Activated CD8-positive, alpha-beta T cell treated with anti-CD3 and anti-CD28 coated beads, Interleukin-2, amount 10 ng/mL, durations not matched to agents 7 days and 5 days (primary cell): ENCODE measurements at regions of chr2 and their contacts with region 1.

Region 1: GRCh38 chr2:161954103-161954502 is 119.9 kb downstream of the DPP4 start:
- DNase-seq: peak; percentile 50
- ATAC-seq: peak; percentile 35
- H3K4me3 Mint-ChIP-seq: peak overlapping the region; percentile 13
- H3K27ac Mint-ChIP-seq: peak overlapping the region; percentile 96
- H3K4me1 Mint-ChIP-seq: peaks cover 70% of the 10 kb centered on the region
- H3K27me3 Mint-ChIP-seq: no peaks in the 10 kb centered on the region

Region 2: DNA sequence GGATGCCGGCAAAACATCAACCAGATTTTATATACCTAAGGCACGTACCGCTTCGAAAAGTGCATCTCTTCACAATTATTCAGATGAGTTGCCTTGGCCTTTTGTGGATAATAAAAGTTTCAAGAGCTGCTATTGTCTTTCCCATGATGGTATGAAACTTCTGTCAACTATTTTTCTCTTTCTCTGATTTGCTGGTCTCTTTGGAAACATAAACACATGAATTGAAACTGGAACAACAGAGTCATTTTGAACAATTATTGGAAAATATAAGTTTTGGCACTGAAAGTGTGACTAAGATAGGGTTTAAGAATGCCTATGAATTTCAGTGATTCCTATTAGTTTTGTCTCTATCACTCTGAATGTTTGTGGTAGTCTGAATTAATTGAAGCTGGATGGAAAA is 10.1 kb after region 1 on chr2:
- CTCF ChIA-PET with region 1: interaction called, 15 read pairs
- POLR2A ChIA-PET with region 1: interaction called, 9 read pairs
- DNase-seq: no peak
- ATAC-seq: no peak
- H3K4me3 Mint-ChIP-seq: no peak overlapping the region
- H3K27ac Mint-ChIP-seq: peak overlapping the region; percentile 16
- H3K4me1 Mint-ChIP-seq: peaks cover 65% of the 10 kb centered on the region
- H3K27me3 Mint-ChIP-seq: no peaks in the 10 kb centered on the region

Region 3: DNA sequence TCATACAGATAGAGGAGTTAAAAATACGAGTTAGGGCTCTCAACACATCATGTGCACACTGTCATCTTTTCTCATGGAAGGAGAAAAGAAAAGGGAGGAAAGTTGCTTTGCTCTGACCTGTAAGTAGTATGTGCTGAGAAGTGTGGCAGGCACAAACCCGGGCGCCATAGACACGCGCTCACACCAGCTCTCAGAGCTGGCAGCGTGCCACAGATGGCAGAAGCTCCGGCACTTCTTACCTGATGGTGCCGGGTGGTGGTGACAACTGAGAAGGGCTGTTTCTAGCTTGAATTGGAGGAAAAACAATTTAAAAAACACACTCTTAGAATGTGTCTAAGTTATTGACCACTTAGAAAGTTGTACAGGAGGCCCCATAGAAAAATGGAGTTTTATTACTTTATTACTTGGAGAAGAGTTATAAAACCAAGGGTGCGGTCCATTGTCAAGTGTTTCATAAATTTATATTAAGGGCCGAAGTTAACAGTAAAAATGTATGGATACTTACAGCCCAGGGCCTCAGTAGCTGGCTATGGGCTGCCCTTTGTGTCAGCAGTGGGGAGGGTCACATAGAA is 27.7 kb after region 1 on chr2:
- CTCF ChIA-PET with region 1: interaction called, 20 read pairs
- POLR2A ChIA-PET with region 1: interaction called, 13 read pairs
- DNase-seq: no peak
- ATAC-seq: no peak
- H3K4me3 Mint-ChIP-seq: no peak overlapping the region
- H3K27ac Mint-ChIP-seq: peak overlapping the region; percentile 37
- H3K4me1 Mint-ChIP-seq: peaks cover 59% of the 10 kb centered on the region
- H3K27me3 Mint-ChIP-seq: no peaks in the 10 kb centered on the region

Region 4: GRCh38 chr2:162013514-162014475 is 59.7 kb after region 1 on chr2:
- CTCF ChIA-PET with region 1: interaction called, 8 read pairs
- POLR2A ChIA-PET with region 1: interaction called, 33 read pairs
- DNase-seq: no peak
- ATAC-seq: no peak
- H3K4me3 Mint-ChIP-seq: peak overlapping the region; percentile 39
- H3K27ac Mint-ChIP-seq: peak overlapping the region; percentile 93
- H3K4me1 Mint-ChIP-seq: peaks cover 79% of the 10 kb centered on the region
- H3K27me3 Mint-ChIP-seq: no peaks in the 10 kb centered on the region

Region 5: GRCh38 chr2:162318328-162319180 is 364.5 kb after region 1 on chr2 and contains the start of gene IFIH1:
- CTCF ChIA-PET with region 1: no interaction called
- POLR2A ChIA-PET with region 1: interaction called, 11 read pairs
- DNase-seq: peak; percentile 82
- ATAC-seq: peak; percentile 87
- H3K4me3 Mint-ChIP-seq: peak within 1 kb of the TSS; percentile 95
- H3K27ac Mint-ChIP-seq: peak within 1 kb of the TSS; percentile 99
- H3K4me1 Mint-ChIP-seq: peaks cover 61% of the 10 kb centered on the region
- H3K27me3 Mint-ChIP-seq: no peaks in the 10 kb centered on the region
- total RNA-seq, gene IFIH1: 37.3 to 37.6 TPM